Posterior vena cava (tissue), 2 donors: ENCODE measurements at regions of chrX and their contacts with region 1.

Region 1: GRCh38 chrX:152886716-152887115 is 11.2 kb upstream of the ZNF185 start:
- DNase-seq: no peak

Region 2: GRCh38 chrX:152926279-152926678 is 39.6 kb after region 1 on chrX:
- intact Hi-C with region 1: no loop called
- DNase-seq: no peak

Region 3: DNA sequence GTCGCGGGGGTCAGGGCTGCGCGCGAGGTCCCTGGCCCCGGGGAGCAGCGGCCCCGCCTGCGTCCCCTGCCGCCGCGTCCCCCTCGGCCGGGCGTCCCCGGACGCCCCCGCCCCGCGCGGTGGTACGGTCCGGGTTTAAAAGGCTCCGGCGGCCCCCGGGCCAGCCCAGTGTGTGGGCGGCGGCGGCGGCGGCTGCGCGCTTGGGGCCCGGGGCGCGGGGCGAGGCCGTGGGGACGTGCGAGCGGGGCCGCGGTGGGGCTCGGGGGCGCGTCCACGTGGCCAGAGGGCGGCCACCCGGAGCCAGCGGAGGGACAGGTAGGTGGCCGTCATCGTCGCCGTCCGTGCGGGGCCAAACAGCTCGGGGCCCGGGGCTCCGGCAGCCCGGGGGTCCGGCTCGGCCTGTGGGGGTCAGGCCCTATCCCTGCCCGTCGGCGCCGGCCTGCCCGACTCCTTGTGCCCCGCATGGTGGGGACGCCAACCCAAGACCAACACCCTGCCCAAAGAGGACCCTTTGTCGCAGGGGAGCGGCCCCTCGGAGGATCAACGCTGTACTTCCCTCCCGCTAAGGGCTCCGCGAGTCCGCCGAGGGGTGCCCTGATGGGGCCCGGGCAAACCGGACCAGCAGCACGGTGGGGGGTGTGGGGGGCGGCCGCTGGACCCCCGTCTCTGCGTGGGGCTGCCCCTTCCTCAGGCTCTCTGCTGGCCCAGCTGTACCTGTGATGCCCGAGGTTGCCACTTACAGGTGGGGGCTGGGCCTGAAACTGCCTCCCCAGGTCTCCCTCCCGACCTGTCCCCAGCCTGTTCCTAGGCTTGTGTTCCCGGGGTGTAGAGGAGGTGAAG is 1571.6 kb after region 1 on chrX and contains the start of gene PLXNA3:
- intact Hi-C with region 1: loop called in 1 of 2 experiments (anchors 10 kb)
- DNase-seq: no peak
- total RNA-seq, gene PLXNA3: 23.7 to 31.1 TPM